ENCODE measurements at regions of chr5 and their contacts with region 1.

Region 1: DNA sequence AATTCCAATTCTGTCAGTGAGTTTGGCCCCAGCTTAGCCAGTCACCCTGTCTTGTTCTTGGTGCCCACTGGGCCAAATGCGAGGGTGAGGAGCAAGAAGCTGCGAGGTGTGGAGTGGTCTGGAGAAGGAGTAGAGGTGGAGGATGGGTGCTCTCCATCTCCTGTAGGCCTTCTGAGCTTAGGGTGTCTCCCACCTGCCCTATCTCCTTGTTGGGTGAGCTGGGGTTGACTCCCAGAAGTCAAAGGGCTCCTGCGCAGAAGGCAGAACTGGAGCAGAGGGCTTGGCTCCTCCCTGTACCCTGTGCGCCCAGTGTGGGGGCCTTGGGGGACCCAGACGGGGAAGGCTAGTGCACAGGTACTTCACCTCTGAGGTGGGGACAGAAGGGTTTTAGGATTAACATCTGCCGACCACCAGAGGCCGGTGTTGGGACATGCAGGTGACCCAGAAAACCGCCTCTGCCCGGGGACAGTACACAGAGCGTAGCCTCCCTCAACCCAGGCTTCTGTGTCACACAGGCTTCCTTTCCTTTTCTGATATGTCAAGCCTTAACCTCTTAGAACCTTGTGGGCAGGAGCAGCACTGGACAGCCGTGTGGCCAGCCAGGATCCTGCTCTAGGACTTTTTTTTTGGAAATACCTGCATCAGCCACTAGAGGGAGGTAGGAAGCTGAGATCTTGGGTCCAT is 16.9 kb downstream of the IL5 start:
- DNase-seq: peak in 8 of 14 experiments; percentile 2 to 72 (median 36)
- ATAC-seq: peak; percentile 75
- H3K4me3 ChIP-seq: no peak overlapping the region
- H3K4me3 Mint-ChIP-seq: no peak overlapping the region
- H3K27ac ChIP-seq: no peak overlapping the region
- H3K27ac Mint-ChIP-seq: no peak overlapping the region
- H3K4me1 ChIP-seq: peaks cover 15% of the 10 kb centered on the region
- H3K4me1 Mint-ChIP-seq: peaks cover 8% of the 10 kb centered on the region
- H3K27me3 ChIP-seq: peaks cover 0 to under 1% of the 10 kb centered on the region in 2 experiments
- H3K27me3 Mint-ChIP-seq: no peaks in the 10 kb centered on the region
- CTCF ChIP-seq: peak; percentile 98

Region 2: GRCh38 chr5:132612846-132613245 is 86.4 kb after region 1 on chr5:
- CTCF ChIA-PET with region 1: no interaction called
- POLR2A ChIA-PET with region 1: no interaction called
- intact Hi-C with region 1: loop called in 1 of 2 experiments (anchors 10 kb)
- DNase-seq: no peak
- ATAC-seq: no peak
- H3K4me3 ChIP-seq: no peak overlapping the region
- H3K4me3 Mint-ChIP-seq: no peak overlapping the region
- H3K27ac ChIP-seq: no peak overlapping the region
- H3K27ac Mint-ChIP-seq: no peak overlapping the region
- H3K4me1 ChIP-seq: no peaks in the 10 kb centered on the region
- H3K4me1 Mint-ChIP-seq: no peaks in the 10 kb centered on the region
- H3K27me3 ChIP-seq: no peaks in the 10 kb centered on the region
- H3K27me3 Mint-ChIP-seq: no peaks in the 10 kb centered on the region
- CTCF ChIP-seq: no peak

Region 3: GRCh38 chr5:132714456-132715307 is 188.2 kb after region 1 on chr5:
- CTCF ChIA-PET with region 1: interaction called, 3 read pairs
- POLR2A ChIA-PET with region 1: no interaction called
- intact Hi-C with region 1: loop called (anchors 1 to 5 kb)
- DNase-seq: peak in 4 of 14 experiments; percentile 2 to 39 (median 25)
- ATAC-seq: peak; percentile 68
- H3K4me3 ChIP-seq: no peak overlapping the region
- H3K4me3 Mint-ChIP-seq: peak overlapping the region; percentile 5
- H3K27ac ChIP-seq: no peak overlapping the region
- H3K27ac Mint-ChIP-seq: no peak overlapping the region
- H3K4me1 ChIP-seq: no peaks in the 10 kb centered on the region
- H3K4me1 Mint-ChIP-seq: peaks cover 9% of the 10 kb centered on the region
- H3K27me3 ChIP-seq: no peaks in the 10 kb centered on the region
- H3K27me3 Mint-ChIP-seq: no peaks in the 10 kb centered on the region
- CTCF ChIP-seq: peak; percentile 66

Region 4: DNA sequence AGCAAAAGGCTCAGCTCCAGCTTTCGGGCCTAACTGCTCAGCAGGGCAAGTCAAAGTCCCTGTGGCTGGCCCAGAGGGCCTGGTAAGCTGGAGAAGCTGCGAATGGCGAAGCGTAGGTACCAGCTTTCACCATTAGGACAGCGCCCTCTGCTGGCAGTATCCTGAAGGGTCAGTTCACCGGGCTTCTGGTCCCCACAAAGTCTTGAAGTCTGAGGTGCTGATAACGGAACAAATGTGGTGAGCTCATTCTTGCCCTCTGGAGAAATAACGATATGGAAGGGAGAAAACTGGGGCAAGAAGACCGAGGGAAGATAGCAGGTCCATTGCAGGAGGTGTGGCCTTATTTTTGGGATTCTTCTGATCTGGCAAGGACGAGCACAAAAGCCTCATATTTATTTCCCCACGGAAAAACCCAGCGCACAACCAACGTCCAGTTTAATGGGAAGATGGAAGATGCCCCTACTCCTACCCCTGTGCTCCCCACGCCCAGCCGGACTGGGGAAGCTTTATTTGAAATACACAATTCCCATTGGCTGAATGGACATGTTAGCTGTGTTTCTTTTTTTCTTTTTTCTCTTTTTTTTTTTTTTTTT is 293.8 kb after region 1 on chr5:
- CTCF ChIA-PET with region 1: interaction called, 4 read pairs
- POLR2A ChIA-PET with region 1: interaction called, 3 read pairs
- intact Hi-C with region 1: loop called (anchors 1 to 2 kb)
- DNase-seq: peak; percentile 79 to 94 (median 86)
- ATAC-seq: peak; percentile 79
- H3K4me3 ChIP-seq: peak overlapping the region; percentile 43
- H3K4me3 Mint-ChIP-seq: peak overlapping the region; percentile 62
- H3K27ac ChIP-seq: no peak overlapping the region
- H3K27ac Mint-ChIP-seq: no peak overlapping the region
- H3K4me1 ChIP-seq: peaks cover 22% of the 10 kb centered on the region
- H3K4me1 Mint-ChIP-seq: peaks cover 13% of the 10 kb centered on the region
- H3K27me3 ChIP-seq: peaks cover 27 to 30% of the 10 kb centered on the region in 2 experiments
- H3K27me3 Mint-ChIP-seq: peaks cover 50% of the 10 kb centered on the region
- CTCF ChIP-seq: peak; percentile 90